CD8-positive, alpha-beta T cell (primary cell): ENCODE measurements at regions of chr19 and their contacts with region 1.

Region 1: DNA sequence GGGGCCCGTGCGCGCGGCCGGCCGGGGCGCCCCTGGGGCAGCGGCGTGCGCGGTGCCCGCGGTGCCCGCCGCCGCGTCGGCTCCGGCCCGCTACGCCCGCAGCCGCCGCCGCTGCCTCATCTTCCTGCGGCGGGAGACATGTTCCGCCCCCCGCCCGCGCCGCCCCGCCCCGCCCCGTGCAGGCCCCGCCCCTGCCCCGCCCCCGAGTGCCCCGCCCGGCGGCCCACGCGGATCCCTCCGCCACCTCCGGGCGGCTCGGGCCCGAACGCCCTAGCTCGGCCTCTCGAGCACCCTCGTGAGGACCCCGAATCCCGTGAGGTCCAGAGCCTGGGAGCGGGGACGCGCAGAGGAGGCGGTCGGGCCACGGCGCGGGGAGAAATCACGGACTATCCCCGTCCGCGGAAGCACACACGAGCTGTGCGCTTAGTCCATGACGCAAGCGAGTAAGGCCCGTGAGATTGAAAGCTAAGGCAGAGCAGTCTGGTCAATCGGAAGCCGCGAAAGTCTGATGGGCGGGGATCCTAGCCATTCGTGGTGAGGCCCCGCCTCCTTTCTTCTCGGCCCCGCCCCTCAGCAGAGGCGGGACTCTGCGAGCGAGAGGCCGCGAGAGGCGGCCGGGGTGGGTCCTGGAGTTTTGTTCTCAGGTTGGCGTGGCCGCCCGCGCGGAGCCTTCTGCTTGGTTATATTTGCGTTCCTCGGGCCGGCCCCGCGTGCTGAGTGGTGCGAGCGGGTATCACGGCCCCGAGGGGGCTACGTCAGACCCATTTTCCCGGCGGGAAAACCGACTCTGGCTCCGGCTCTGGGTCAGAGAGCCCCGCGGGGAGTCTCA is at the start of gene TCF3:
- DNase-seq: peak; percentile 98 to 99 (median 99)
- ATAC-seq: peak; percentile 90
- H3K4me3 ChIP-seq: peak within 1 kb of the TSS; percentile 66 to 87
- H3K4me3 Mint-ChIP-seq: peak within 1 kb of the TSS; percentile 88
- H3K27ac ChIP-seq: peak within 1 kb of the TSS; percentile 97 to 100
- H3K27ac Mint-ChIP-seq: peak within 1 kb of the TSS; percentile 97
- H3K4me1 ChIP-seq: peaks cover 12% of the 10 kb centered on the region
- H3K4me1 Mint-ChIP-seq: peaks cover 10% of the 10 kb centered on the region
- H3K27me3 ChIP-seq: no peaks in the 10 kb centered on the region
- H3K27me3 Mint-ChIP-seq: no peaks in the 10 kb centered on the region
- CTCF ChIP-seq: no peak
- total RNA-seq, gene TCF3: 67.6 to 69.7 TPM

Region 2: DNA sequence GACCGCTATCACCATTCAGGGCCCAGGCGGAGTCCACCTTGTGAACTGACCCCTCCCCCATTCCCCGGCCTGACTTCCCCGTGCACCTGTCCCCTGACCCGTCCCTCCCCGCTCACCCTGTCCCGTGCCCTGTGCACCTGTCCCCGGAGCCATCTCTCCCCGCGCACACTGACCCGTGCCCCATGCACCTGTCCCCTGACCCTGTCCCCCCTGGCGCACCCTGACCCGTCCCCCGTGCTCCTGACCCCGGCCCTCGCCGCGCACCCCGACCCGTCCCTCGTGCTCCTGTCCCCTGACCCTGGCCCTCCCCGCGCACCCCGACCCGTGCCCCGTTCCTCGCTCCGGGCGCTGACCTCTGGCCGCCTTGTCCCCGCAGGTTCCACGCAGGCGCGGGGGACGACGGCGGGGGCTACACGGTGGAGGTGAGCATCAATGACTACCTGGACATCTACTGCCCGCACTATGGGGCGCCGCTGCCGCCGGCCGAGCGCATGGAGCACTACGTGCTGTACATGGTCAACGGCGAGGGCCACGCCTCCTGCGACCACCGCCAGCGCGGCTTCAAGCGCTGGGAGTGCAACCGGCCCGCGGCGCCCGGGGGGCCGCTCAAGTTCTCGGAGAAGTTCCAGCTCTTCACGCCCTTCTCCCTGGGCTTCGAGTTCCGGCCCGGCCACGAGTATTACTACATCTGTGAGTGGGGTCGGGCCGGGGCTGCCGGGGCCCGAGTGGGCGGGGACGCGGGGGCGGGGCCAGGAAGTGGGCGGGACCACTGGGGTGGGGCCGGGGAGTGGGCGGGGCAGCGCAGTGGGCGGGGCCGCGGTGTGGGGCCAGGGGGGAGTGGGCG is 357.3 kb before region 1 on chr19:
- CTCF ChIA-PET with region 1: no interaction called
- POLR2A ChIA-PET with region 1: no interaction called
- intact Hi-C with region 1: no loop called
- DNase-seq: peak in 6 of 9 experiments; percentile 27 to 56 (median 49)
- ATAC-seq: peak; percentile 81
- H3K4me3 ChIP-seq: no peak overlapping the region
- H3K4me3 Mint-ChIP-seq: no peak overlapping the region
- H3K27ac ChIP-seq: no peak overlapping the region
- H3K27ac Mint-ChIP-seq: no peak overlapping the region
- H3K4me1 ChIP-seq: peaks cover 6% of the 10 kb centered on the region
- H3K4me1 Mint-ChIP-seq: peaks cover 3% of the 10 kb centered on the region
- H3K27me3 ChIP-seq: peaks cover 13 to 18% of the 10 kb centered on the region in 2 experiments
- H3K27me3 Mint-ChIP-seq: peaks cover 18% of the 10 kb centered on the region
- CTCF ChIP-seq: no peak

Region 3: GRCh38 chr19:1478934-1479707 is 173.6 kb before region 1 on chr19 and contains the start of gene C19orf25:
- CTCF ChIA-PET with region 1: no interaction called
- POLR2A ChIA-PET with region 1: no interaction called
- intact Hi-C with region 1: loop called in 1 of 2 experiments (anchors 5 kb)
- DNase-seq: peak; percentile 81 to 94 (median 89)
- ATAC-seq: peak; percentile 91
- H3K4me3 ChIP-seq: peak within 1 kb of the TSS; percentile 68 to 86
- H3K4me3 Mint-ChIP-seq: peak within 1 kb of the TSS; percentile 99
- H3K27ac ChIP-seq: peak within 1 kb of the TSS; percentile 65 to 76
- H3K27ac Mint-ChIP-seq: peak within 1 kb of the TSS; percentile 98
- H3K4me1 ChIP-seq: peaks cover 12% of the 10 kb centered on the region
- H3K4me1 Mint-ChIP-seq: peaks cover 19% of the 10 kb centered on the region
- H3K27me3 ChIP-seq: no peaks in the 10 kb centered on the region
- H3K27me3 Mint-ChIP-seq: no peaks in the 10 kb centered on the region
- CTCF ChIP-seq: no peak
- total RNA-seq, gene C19orf25: 11.9 to 12.1 TPM

Region 4: GRCh38 chr19:1605236-1606137 is 47.2 kb before region 1 on chr19 and contains the start of gene UQCR11:
- CTCF ChIA-PET with region 1: interaction called, 9 read pairs
- POLR2A ChIA-PET with region 1: interaction called, 50 read pairs
- intact Hi-C with region 1: loop called (anchors 1 kb)
- DNase-seq: peak; percentile 76 to 96 (median 93)
- ATAC-seq: peak; percentile 83
- H3K4me3 ChIP-seq: peak within 1 kb of the TSS; percentile 76 to 100
- H3K4me3 Mint-ChIP-seq: peak within 1 kb of the TSS; percentile 99
- H3K27ac ChIP-seq: peak within 1 kb of the TSS; percentile 72 to 82
- H3K27ac Mint-ChIP-seq: peak within 1 kb of the TSS; percentile 99
- H3K4me1 ChIP-seq: peaks cover 51% of the 10 kb centered on the region
- H3K4me1 Mint-ChIP-seq: peaks cover 55% of the 10 kb centered on the region
- H3K27me3 ChIP-seq: no peaks in the 10 kb centered on the region
- H3K27me3 Mint-ChIP-seq: no peaks in the 10 kb centered on the region
- CTCF ChIP-seq: peak; percentile 90
- total RNA-seq, gene UQCR11: 97.1 to 98.0 TPM

Region 5: DNA sequence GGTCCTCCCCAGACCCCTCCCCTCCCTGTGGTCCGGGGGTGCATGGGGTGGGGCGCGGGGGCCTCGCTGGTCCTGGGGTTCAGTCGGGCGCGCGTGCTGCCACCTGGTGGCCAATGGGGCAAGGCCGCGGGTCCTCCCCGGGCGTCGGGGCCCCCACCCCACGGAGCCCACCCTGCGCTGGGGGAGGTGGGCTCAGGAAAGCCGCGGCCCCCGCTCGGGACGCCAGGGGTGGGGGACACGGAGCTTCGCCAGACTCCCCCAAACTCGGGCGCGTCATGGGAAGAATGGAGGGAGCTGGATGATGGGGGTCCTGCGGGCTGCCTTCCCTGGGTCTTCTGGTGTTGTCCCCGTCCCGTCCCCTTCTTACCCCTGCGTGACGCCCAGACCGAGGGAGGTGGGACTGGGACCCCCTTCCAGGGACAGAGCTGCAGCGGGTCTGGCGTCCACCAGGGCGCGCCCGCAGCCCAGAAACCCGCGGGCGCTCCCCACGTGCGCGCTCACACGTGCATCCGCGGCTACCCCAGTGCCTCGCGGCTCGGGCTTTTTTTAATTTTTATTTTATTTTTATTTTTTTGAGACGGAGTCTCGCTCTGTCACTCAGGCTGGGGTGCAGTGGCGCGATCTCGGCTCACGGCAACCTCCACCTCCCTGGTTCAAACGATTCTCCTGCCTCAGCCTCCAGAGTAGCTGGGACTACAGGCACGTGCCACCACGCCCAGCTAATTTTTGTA is 19.5 kb after region 1 on chr19:
- CTCF ChIA-PET with region 1: interaction called, 5 read pairs
- POLR2A ChIA-PET with region 1: no interaction called
- intact Hi-C with region 1: loop called in 1 of 2 experiments (anchors 2 kb)
- DNase-seq: peak in 8 of 9 experiments; percentile 46 to 78 (median 66)
- ATAC-seq: peak; percentile 66
- H3K4me3 ChIP-seq: peak overlapping the region; percentile 20 to 30
- H3K4me3 Mint-ChIP-seq: no peak overlapping the region
- H3K27ac ChIP-seq: no peak overlapping the region
- H3K27ac Mint-ChIP-seq: no peak overlapping the region
- H3K4me1 ChIP-seq: peaks cover 19% of the 10 kb centered on the region
- H3K4me1 Mint-ChIP-seq: peaks cover 16% of the 10 kb centered on the region
- H3K27me3 ChIP-seq: peaks cover 22 to 50% of the 10 kb centered on the region in 2 experiments
- H3K27me3 Mint-ChIP-seq: peaks cover 48% of the 10 kb centered on the region
- CTCF ChIP-seq: peak; percentile 94

Region 6: DNA sequence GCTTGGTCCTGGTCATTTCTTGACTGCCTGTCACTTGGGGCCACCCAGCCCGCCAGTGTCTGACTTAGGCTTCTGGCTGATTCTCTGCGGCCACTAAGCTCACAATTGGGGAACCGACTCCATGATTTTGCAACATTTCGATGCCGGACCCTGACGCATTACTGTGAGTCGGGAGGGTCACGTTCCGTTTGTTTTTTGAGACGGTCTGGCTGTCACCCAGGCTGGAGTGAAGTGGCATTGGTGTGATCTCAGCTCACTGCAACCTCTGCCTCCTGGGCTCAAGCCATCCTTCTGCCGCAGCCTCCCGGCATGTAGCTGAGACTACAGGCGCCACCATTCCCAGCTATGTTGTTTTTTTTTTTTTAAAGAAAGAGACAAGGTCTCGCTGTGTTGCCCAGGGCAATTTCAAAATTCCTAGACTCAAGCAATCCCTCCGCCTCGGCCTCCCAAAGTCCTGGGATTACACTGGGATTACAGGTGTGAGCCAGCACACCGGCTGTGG is 249.3 kb after region 1 on chr19:
- CTCF ChIA-PET with region 1: no interaction called
- POLR2A ChIA-PET with region 1: no interaction called
- intact Hi-C with region 1: no loop called
- DNase-seq: peak in 1 of 9 experiments; percentile 45
- ATAC-seq: no peak
- H3K4me3 ChIP-seq: no peak overlapping the region
- H3K4me3 Mint-ChIP-seq: no peak overlapping the region
- H3K27ac ChIP-seq: no peak overlapping the region
- H3K27ac Mint-ChIP-seq: no peak overlapping the region
- H3K4me1 ChIP-seq: peaks cover 28% of the 10 kb centered on the region
- H3K4me1 Mint-ChIP-seq: peaks cover 23% of the 10 kb centered on the region
- H3K27me3 ChIP-seq: no peaks in the 10 kb centered on the region
- H3K27me3 Mint-ChIP-seq: no peaks in the 10 kb centered on the region
- CTCF ChIP-seq: no peak

Region 7: GRCh38 chr19:2164020-2164998 is 511.6 kb after region 1 on chr19:
- CTCF ChIA-PET with region 1: no interaction called
- POLR2A ChIA-PET with region 1: no interaction called
- intact Hi-C with region 1: loop called in 1 of 2 experiments (anchors 5 kb)
- DNase-seq: no peak
- ATAC-seq: peak; percentile 41
- H3K4me3 ChIP-seq: peak overlapping the region; percentile 67
- H3K4me3 Mint-ChIP-seq: peak overlapping the region; percentile 86
- H3K27ac ChIP-seq: peak overlapping the region; percentile 48 to 76
- H3K27ac Mint-ChIP-seq: peak overlapping the region; percentile 18
- H3K4me1 ChIP-seq: peaks cover 33% of the 10 kb centered on the region
- H3K4me1 Mint-ChIP-seq: peaks cover 26% of the 10 kb centered on the region
- H3K27me3 ChIP-seq: peaks cover 0 to 2% of the 10 kb centered on the region in 2 experiments
- H3K27me3 Mint-ChIP-seq: no peaks in the 10 kb centered on the region
- CTCF ChIP-seq: no peak